A673 (cell line): ENCODE measurements at regions of chr17 and their contacts with region 1.

Region 1: DNA sequence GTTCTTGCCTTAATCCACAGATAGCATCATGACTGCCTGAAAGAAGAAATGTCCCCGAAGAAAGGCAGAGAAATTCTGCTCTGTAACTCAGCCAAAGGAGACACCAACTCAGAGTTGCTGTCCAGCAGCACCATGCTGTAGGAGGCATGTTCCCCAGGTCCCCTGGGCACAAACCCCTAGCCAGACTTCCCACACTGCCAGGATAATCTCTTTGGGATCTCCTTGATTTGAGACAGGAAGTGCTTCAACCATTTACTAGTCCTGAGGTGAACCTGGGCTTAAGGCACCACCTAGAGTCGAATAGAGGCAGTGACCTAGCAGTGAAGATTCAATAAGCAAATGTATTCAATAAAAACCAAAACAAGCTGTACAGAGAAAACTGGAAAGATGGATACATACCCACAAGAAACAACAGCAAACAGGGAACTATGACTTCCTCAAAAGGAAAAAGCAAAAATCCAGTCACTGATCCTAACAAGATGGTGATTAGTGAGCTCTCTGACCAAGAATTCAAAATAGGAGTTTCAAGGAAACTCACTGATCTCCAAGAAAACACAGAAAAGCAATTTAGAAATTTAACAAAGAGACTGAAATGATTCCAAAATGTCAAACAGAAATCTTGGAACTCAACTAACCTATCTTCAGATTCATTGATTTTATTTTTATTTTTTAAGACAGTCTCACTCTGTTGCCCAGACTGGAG is 5.7 kb downstream of the OR4D2 start:
- DNase-seq: peak; percentile 52
- H3K4me3 ChIP-seq: no peak overlapping the region
- H3K27ac ChIP-seq: no peak overlapping the region
- H3K4me1 ChIP-seq: no peaks in the 10 kb centered on the region
- H3K27me3 ChIP-seq: peaks cover 80% of the 10 kb centered on the region
- CTCF ChIP-seq: peak; percentile 52

Region 2: DNA sequence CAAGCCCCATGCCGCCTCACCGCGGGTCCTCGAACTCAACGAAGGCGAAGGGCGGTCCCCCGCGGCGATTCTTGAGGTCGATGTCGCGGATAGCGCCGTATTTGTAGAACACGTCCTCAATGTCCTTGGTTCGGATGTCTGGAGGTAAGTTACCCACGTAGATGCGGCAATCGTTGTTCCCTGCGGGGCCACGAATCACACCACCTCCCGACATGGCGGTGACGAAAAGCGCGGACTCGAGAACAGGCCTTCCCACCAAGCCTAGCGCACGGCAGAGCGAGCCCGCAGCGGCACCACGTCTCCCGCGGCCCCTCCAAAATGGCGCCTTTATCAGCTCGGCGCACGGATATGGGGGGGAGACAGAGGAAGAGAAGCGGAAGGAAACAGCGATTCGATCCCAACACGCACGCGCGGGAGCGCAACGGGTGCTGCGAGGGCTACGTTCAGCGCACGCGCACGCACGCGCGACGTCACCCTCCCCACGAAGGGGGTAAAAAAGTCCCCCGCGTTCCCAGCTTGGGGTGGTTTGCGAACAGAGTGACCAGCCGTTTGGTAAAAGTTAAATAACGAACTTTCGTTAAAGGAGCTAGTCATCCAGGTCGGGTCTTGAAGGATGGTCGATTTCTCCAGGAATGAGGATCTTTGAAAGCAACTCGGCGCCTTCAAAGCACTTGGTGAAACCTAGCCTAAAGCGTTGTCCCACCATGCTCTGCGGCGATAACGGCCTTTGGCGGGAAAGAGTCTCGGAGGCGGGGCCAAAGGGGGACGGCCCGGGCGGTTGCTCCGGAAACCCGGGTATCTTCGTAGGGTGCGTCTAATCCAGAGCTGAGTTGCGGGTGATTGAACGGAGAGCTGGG is 165.4 kb before region 1 on chr17 and contains the start of gene SRSF1:
- CTCF ChIA-PET with region 1: no interaction called
- POLR2A ChIA-PET with region 1: no interaction called
- intact Hi-C with region 1: no loop called
- DNase-seq: peak; percentile 99
- H3K4me3 ChIP-seq: peak within 1 kb of the TSS; percentile 88
- H3K27ac ChIP-seq: peak within 1 kb of the TSS; percentile 98
- H3K4me1 ChIP-seq: peaks cover 31% of the 10 kb centered on the region
- H3K27me3 ChIP-seq: no peaks in the 10 kb centered on the region
- CTCF ChIP-seq: no peak
- total RNA-seq, gene SRSF1: 491 and 512 TPM in 2 replicates

Region 3: DNA sequence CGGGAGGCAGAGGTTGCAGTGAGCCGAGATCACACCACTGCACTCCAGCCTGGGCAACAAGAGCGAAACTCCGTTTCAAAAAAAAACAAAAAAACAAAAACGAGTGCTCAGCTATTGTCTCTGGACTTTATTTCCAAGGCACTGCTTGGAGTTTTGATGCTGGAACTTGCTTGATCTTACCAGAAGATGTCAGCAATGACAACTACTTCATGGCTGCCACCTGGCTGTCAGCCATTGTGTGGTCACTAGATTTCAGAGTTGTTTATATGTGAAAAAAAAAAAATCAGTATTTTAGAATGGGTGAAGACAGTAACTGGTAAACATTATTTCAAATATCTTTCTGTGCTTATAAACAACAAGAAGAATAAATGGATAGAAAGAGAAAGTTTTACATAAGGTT is 50.6 kb before region 1 on chr17:
- CTCF ChIA-PET with region 1: interaction called, 4 read pairs
- POLR2A ChIA-PET with region 1: no interaction called
- intact Hi-C with region 1: loop called (anchors 5 kb)
- DNase-seq: peak; percentile 45
- H3K4me3 ChIP-seq: no peak overlapping the region
- H3K27ac ChIP-seq: no peak overlapping the region
- H3K4me1 ChIP-seq: no peaks in the 10 kb centered on the region
- H3K27me3 ChIP-seq: peaks cover 48% of the 10 kb centered on the region
- CTCF ChIP-seq: peak; percentile 42